ENCODE measurements at regions of chr4 and their contacts with region 1.

Region 1: DNA sequence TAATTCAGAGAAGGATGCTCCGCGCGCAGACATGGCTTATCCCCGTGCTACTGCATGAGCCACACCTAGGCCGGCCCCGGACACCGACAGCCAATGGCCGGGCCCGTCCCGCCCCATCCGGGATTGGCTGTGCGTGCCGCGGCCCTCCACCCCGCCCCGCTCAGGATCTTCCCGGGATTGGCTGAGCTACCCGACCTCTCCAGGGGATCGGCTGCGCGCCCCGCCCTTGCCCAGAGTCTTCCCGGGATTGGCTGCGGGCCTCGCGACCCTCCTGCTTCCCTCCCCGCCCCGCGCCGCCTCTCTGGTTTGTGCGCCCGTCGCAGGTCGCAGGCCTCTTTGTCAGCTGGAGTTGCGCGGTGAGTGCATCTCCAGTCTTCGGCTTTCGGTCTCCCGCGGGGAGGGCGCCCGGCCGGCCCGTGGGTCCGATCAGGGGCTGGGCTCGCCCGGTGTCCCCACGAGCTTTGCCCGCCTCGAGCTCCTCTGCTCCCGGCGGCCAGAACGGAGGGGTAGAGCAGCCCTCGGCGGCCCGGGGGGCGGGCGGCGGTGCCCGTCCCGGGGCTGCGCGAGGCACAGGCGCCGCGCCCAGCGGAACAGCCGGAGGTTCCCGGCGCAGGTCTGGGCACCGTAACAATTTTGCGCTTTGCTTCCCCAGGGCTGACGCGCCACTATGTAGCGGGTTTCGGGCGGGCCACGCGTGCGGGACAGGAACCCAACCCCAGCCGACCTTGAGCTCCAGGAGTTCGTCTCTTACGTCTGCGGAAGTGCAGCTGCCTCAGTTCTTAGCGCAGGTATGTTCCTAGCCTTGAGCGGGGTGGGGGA is 38.8 kb downstream of the ERVMER34-1 start:
- DNase-seq: peak; percentile 95
- ATAC-seq: peak; percentile 94
- H3K4me3 ChIP-seq: peak overlapping the region; percentile 55 to 84 (median 70)
- H3K4me3 Mint-ChIP-seq: peak overlapping the region; percentile 94
- H3K27ac ChIP-seq: peak overlapping the region; percentile 59 to 85
- H3K27ac Mint-ChIP-seq: peak overlapping the region; percentile 95
- H3K4me1 ChIP-seq: peaks cover 40 to 53% of the 10 kb centered on the region in 2 donors
- H3K4me1 Mint-ChIP-seq: peaks cover 62% of the 10 kb centered on the region
- H3K27me3 ChIP-seq: no peaks in the 10 kb centered on the region
- H3K27me3 Mint-ChIP-seq: no peaks in the 10 kb centered on the region
- CTCF ChIP-seq: no peak

Region 2: DNA sequence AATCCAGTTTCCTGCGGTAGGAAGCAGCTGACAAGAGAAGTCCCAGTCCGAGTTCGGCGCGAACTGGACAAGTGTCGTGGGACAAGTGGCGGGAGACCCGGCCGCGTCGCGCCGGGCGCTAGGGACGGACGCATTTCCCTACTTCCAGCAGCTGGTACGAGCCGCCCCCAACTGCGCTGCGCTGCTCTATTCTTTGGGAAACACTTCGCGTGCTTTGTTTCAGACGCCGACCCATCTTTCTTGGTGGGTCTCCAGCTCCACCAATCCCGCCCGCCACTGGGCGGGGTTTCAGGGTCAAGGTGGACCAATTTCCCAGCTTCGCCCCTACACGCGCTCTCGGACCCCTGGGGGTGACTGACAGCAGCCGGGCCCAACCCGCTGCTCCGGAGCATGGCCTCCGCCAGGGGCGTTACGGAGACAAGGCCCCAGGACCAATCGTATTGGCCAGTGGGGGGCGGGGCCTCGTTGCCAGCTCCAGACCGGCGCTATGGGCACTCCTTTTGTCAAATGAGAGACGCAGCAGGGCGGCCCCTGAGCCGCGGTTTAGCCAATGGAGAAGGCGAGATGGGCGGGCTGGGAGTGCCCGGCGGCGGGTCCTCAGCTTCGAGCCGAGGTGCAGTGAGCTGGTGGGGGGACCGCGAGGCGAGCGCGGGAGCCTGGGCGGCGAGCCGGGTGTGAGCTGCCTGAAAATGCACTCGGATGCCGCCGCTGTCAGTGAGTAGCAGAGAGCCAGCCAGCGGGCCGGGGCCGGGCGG is 869.6 kb before region 1 on chr4 and contains the start of gene DCUN1D4:
- CTCF ChIA-PET with region 1: no interaction called
- POLR2A ChIA-PET with region 1: interaction called, 3 read pairs
- intact Hi-C with region 1: loop called (anchors 1 kb)
- DNase-seq: peak; percentile 98
- ATAC-seq: peak; percentile 88
- H3K4me3 ChIP-seq: peak within 1 kb of the TSS; percentile 67 to 96 (median 76)
- H3K4me3 Mint-ChIP-seq: peak within 1 kb of the TSS; percentile 94
- H3K27ac ChIP-seq: peak within 1 kb of the TSS; percentile 64 to 81
- H3K27ac Mint-ChIP-seq: peak within 1 kb of the TSS; percentile 95
- H3K4me1 ChIP-seq: peaks cover 9 to 12% of the 10 kb centered on the region in 2 donors
- H3K4me1 Mint-ChIP-seq: peaks cover 11% of the 10 kb centered on the region
- H3K27me3 ChIP-seq: no peaks in the 10 kb centered on the region
- H3K27me3 Mint-ChIP-seq: no peaks in the 10 kb centered on the region
- CTCF ChIP-seq: no peak
- total RNA-seq, gene DCUN1D4: 39.7 and 45.8 TPM in 2 replicates

Region 3: GRCh38 chr4:52701207-52701606 is 11.2 kb before region 1 on chr4:
- CTCF ChIA-PET with region 1: no interaction called
- POLR2A ChIA-PET with region 1: interaction called, 11 read pairs
- intact Hi-C with region 1: no loop called
- DNase-seq: peak; percentile 60
- ATAC-seq: peak; percentile 77
- H3K4me3 ChIP-seq: no peak overlapping the region
- H3K4me3 Mint-ChIP-seq: peak overlapping the region; percentile 53
- H3K27ac ChIP-seq: peak overlapping the region in 1 of 2 donors; percentile 19
- H3K27ac Mint-ChIP-seq: peak overlapping the region; percentile 15
- H3K4me1 ChIP-seq: peaks cover 6 to 12% of the 10 kb centered on the region in 2 donors
- H3K4me1 Mint-ChIP-seq: peaks cover 12% of the 10 kb centered on the region
- H3K27me3 ChIP-seq: no peaks in the 10 kb centered on the region
- H3K27me3 Mint-ChIP-seq: no peaks in the 10 kb centered on the region
- CTCF ChIP-seq: no peak

Region 4: GRCh38 chr4:53365486-53366300 is 653.3 kb after region 1 on chr4 and contains the start of gene SCFD2:
- CTCF ChIA-PET with region 1: no interaction called
- POLR2A ChIA-PET with region 1: no interaction called
- intact Hi-C with region 1: loop called (anchors 1 kb)
- DNase-seq: peak; percentile 97
- ATAC-seq: peak; percentile 98
- H3K4me3 ChIP-seq: peak within 1 kb of the TSS; percentile 82 to 97 (median 91)
- H3K4me3 Mint-ChIP-seq: peak within 1 kb of the TSS; percentile 96
- H3K27ac ChIP-seq: peak within 1 kb of the TSS; percentile 64 to 92
- H3K27ac Mint-ChIP-seq: peak within 1 kb of the TSS; percentile 95
- H3K4me1 ChIP-seq: peaks cover 16 to 21% of the 10 kb centered on the region in 2 donors
- H3K4me1 Mint-ChIP-seq: peaks cover 45% of the 10 kb centered on the region
- H3K27me3 ChIP-seq: peaks cover 0 to 4% (median 1%) of the 10 kb centered on the region in 4 experiments
- H3K27me3 Mint-ChIP-seq: peaks cover 22% of the 10 kb centered on the region
- CTCF ChIP-seq: no peak
- total RNA-seq, gene SCFD2: 20.4 and 20.9 TPM in 2 replicates

Region 5: DNA sequence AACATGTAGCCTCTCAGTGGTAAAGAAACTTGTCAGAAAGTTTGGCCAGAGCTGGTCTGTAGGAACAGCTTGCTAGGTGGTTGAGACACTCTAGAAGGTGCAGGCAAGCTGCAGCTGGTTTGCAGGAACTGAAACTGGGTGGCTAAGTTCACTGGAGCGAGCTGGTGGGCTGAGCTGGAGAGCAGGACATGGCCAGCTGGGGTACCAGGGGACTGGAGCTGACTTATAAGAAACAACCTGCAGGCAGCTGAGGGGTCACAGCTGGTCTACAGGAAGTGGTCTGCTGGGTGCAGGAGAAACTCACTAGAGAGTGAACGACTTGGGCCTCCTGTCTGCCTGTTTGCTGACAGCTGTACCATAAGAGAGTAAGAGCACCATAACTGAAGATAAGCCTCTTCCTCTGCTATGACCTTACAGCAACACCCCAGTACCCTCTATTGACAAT is 1036.0 kb after region 1 on chr4:
- CTCF ChIA-PET with region 1: no interaction called
- POLR2A ChIA-PET with region 1: no interaction called
- intact Hi-C with region 1: loop called (anchors 5 kb)
- DNase-seq: peak; percentile 79
- ATAC-seq: peak; percentile 92
- H3K4me3 ChIP-seq: peak overlapping the region in 1 of 5 experiments; percentile 4
- H3K4me3 Mint-ChIP-seq: peak overlapping the region; percentile 44
- H3K27ac ChIP-seq: peak overlapping the region; percentile 51 to 78
- H3K27ac Mint-ChIP-seq: peak overlapping the region; percentile 90
- H3K4me1 ChIP-seq: peaks cover 41 to 50% of the 10 kb centered on the region in 2 donors
- H3K4me1 Mint-ChIP-seq: peaks cover 56% of the 10 kb centered on the region
- H3K27me3 ChIP-seq: no peaks in the 10 kb centered on the region
- H3K27me3 Mint-ChIP-seq: no peaks in the 10 kb centered on the region
- CTCF ChIP-seq: no peak